Colonic mucosa (tissue), 4 donors: ENCODE measurements at regions of chr12 and their contacts with region 1.

Region 1: GRCh38 chr12:93397412-93397811 is 19.7 kb downstream of the NUDT4 start:
- DNase-seq: no peak
- H3K4me3 ChIP-seq: no peak overlapping the region
- H3K27ac ChIP-seq: no peak overlapping the region
- H3K4me1 ChIP-seq: no peaks in the 10 kb centered on the region
- H3K27me3 ChIP-seq: no peaks in the 10 kb centered on the region
- CTCF ChIP-seq: no peak

Region 2: DNA sequence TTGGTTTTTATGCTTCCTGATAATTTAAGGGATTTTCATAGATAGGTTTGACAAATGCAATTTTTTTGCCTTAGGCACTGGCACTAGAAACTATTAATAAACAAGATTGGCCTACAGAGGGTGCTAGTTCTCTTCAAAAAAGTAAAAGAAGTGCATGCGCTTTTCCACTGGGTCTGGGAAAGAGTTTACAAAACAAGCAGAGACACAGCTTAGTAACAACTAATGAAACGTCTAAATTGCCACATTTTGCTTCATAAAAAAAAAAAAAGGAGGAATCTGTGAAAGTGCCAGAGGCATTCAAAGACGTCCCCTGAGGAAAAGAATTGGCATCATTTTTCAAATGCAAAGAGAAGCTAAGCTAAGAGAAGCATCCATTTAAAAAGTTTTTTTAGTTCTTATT is 410.1 kb before region 1 on chr12:
- intact Hi-C with region 1: loop called (anchors 5 kb)
- DNase-seq: peak; percentile 41
- H3K4me3 ChIP-seq: no peak overlapping the region
- H3K27ac ChIP-seq: peak overlapping the region; percentile 39
- H3K4me1 ChIP-seq: peaks cover 4% of the 10 kb centered on the region
- H3K27me3 ChIP-seq: no peaks in the 10 kb centered on the region
- CTCF ChIP-seq: peak; percentile 39

Region 3: DNA sequence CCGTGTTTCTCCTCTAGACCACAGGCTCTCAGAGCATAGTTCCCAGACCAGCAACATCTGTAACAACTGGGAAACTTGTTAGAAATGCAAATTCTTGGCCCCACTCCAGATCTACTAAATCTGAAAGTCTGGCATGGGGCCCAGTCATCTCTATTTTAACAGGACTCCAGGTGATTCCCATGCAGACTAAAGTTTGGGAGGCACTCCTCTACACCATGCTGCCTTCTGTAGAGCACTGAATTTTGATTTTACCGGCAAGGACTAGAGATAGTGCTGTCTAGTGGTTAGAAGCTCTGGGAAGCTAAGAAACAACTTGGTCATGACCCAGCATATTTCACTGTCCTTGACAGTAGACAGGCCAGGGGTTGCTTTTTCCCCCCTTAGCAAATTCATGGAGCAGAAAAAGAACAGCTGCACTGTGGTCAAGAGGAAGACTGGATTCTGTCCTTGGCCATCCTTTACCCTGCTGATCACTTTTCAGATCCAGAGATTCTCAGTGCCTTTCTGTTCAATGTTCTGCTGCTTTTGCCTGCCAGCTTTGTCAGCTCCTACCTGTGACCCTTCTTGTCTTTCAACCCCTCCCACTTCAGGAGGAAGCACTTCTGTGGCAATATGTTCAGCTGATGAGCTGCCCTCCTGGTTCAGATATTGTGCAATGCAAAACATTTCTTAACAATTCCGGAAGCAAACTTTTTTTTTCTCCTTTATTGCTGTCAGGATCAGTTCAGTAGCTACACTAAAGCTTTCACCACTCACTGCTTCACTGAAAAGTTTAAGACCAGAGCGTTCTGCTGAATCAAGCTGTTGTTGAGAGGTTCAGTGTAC is 153.5 kb before region 1 on chr12:
- intact Hi-C with region 1: no loop called
- DNase-seq: peak; percentile 64
- H3K4me3 ChIP-seq: no peak overlapping the region
- H3K27ac ChIP-seq: peak overlapping the region; percentile 67
- H3K4me1 ChIP-seq: no peaks in the 10 kb centered on the region
- H3K27me3 ChIP-seq: no peaks in the 10 kb centered on the region
- CTCF ChIP-seq: no peak